ENCODE measurements at regions of chr11 and their contacts with region 1.

Region 1: GRCh38 chr11:12235947-12236743 is 125.8 kb downstream of the MICAL2 start:
- DNase-seq: peak; percentile 74
- H3K4me3 Mint-ChIP-seq: peak overlapping the region; percentile 33
- H3K27ac Mint-ChIP-seq: peak overlapping the region; percentile 95
- H3K4me1 Mint-ChIP-seq: peaks cover 36% of the 10 kb centered on the region
- H3K27me3 Mint-ChIP-seq: no peaks in the 10 kb centered on the region

Region 2: GRCh38 chr11:12052676-12053605 is 183.2 kb before region 1 on chr11:
- CTCF ChIA-PET with region 1: interaction called, 97 read pairs
- POLR2A ChIA-PET with region 1: interaction called, 6 read pairs
- DNase-seq: peak; percentile 44
- H3K4me3 Mint-ChIP-seq: no peak overlapping the region
- H3K27ac Mint-ChIP-seq: no peak overlapping the region
- H3K4me1 Mint-ChIP-seq: peaks cover 1% of the 10 kb centered on the region
- H3K27me3 Mint-ChIP-seq: no peaks in the 10 kb centered on the region

Region 3: DNA sequence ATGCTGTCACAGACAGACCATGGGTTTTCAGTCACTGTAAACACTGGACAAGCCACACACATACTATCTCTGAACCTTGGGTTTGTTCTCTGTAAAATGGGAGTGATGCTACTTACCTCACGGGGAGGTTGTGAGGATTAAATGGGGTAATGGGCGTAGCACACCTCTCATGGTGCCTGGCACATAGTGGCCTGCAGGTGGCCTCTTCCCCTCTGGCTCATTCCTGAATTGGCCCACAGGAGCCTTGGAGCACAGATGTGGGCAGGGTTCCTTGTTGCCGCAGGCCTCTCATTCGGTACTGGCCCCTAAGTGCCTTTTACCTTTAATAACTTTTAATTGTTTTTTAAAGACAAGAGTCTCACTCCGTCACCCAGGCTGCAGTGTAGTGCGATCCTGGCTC is 114.1 kb before region 1 on chr11:
- CTCF ChIA-PET with region 1: interaction called, 12 read pairs
- POLR2A ChIA-PET with region 1: interaction called, 5 read pairs
- DNase-seq: no peak
- H3K4me3 Mint-ChIP-seq: no peak overlapping the region
- H3K27ac Mint-ChIP-seq: no peak overlapping the region
- H3K4me1 Mint-ChIP-seq: peaks cover 75% of the 10 kb centered on the region
- H3K27me3 Mint-ChIP-seq: no peaks in the 10 kb centered on the region

Region 4: DNA sequence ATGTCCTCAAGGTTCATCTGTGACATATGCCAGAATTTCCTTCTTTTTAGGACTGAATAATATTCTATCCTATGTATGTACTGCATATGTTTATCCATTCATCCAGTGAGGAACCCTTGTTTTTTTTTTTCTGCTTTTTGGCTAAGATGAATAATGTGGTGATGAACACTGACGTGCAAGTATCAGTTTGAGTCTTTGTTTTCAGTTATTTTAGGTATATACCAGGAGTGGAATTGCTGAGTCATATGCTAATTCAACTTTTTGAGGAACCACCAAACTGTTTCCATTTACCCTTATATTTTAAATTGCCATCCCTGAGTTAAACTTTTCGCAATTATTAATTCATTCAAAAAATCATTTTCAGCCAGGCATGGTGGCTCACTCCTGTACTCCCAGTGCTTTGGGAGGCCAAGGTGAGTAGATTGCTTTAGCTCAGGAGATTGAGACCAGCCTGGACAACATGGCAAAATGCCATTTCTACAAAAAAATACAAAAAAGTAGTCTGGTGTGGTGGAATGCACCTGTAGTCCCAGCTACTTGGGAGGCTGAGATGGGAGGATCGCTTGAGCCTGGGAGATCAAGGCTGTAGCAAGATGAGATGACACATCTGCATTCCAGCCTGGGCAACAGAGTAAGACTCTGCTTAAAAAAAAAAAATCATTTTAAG is 61.5 kb before region 1 on chr11:
- CTCF ChIA-PET with region 1: interaction called, 10 read pairs
- POLR2A ChIA-PET with region 1: interaction called, 11 read pairs
- DNase-seq: peak; percentile 26
- H3K4me3 Mint-ChIP-seq: peak overlapping the region; percentile 52
- H3K27ac Mint-ChIP-seq: peak overlapping the region; percentile 99
- H3K4me1 Mint-ChIP-seq: peaks cover 78% of the 10 kb centered on the region
- H3K27me3 Mint-ChIP-seq: no peaks in the 10 kb centered on the region

Region 5: GRCh38 chr11:12224537-12224893 is 11.6 kb before region 1 on chr11:
- CTCF ChIA-PET with region 1: interaction called, 65 read pairs
- POLR2A ChIA-PET with region 1: interaction called, 61 read pairs
- DNase-seq: peak; percentile 98
- H3K4me3 Mint-ChIP-seq: peak overlapping the region; percentile 72
- H3K27ac Mint-ChIP-seq: peak overlapping the region; percentile 96
- H3K4me1 Mint-ChIP-seq: peaks cover 68% of the 10 kb centered on the region
- H3K27me3 Mint-ChIP-seq: no peaks in the 10 kb centered on the region

Region 6: DNA sequence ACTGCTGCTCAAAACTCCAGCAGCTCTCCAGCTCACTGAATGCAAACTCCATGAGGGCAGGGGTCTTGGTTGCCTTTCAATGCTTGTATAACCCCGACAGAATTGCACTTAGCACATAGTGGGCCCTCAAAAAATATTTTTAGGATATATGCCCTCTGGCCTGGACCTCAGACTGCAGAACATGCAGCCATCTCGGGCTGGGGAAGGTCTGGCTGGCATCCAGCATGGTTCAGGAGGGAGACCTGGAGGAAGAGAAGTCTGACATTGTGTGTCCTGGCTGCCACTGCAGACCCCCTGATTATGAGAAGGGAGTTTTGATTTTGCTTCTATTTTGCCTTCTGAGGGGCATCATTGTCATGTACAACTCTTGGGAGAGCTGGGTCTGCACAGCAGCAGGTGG is 31.8 kb after region 1 on chr11:
- CTCF ChIA-PET with region 1: no interaction called
- POLR2A ChIA-PET with region 1: no interaction called
- DNase-seq: no peak
- H3K4me3 Mint-ChIP-seq: no peak overlapping the region
- H3K27ac Mint-ChIP-seq: no peak overlapping the region
- H3K4me1 Mint-ChIP-seq: no peaks in the 10 kb centered on the region
- H3K27me3 Mint-ChIP-seq: no peaks in the 10 kb centered on the region

Region 7: DNA sequence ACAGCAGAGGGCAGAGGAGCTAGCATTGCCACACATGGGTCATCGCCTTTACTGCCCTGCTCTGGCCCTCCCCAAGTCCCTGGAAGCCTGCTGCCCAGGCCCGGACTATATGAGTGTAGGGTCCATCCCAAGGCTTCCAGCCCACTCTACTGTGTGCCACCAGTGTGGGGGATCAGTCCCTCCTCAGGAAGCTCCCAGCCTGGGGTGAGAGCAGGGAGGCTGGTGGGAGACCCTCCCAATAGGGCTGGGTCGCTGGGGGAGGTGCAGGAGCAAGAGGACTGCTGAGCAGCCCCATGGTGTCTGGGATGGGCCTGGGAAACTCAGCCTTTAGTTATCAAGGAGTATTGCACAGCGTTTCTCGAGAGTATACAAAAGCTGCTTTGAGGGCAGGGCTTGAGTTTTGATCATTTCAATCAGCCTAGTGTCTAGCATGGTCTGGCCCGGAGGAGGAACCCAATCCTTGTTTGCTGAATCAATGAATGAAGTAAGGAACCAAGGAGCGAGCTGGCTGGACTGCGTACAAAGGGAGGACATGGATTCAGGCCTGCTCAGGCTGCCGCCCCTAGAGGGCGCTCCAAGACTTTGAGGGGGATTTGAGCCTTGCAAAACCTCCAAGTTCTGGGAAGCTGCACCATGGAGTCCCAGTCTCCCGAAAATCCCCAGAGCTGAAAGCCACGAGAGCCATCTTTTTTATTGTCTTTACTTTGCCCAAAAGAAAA is 52.2 kb after region 1 on chr11:
- CTCF ChIA-PET with region 1: interaction called, 11 read pairs
- POLR2A ChIA-PET with region 1: no interaction called
- DNase-seq: peak; percentile 61
- H3K4me3 Mint-ChIP-seq: no peak overlapping the region
- H3K27ac Mint-ChIP-seq: no peak overlapping the region
- H3K4me1 Mint-ChIP-seq: peaks cover 16% of the 10 kb centered on the region
- H3K27me3 Mint-ChIP-seq: no peaks in the 10 kb centered on the region

Measured in activated CD4-positive, alpha-beta memory T cell treated with anti-CD3 and anti-CD28 coated beads, Interleukin-2, amount 10 ng/mL, durations not matched to agents 7 days and 5 days (primary cell).